Activated CD4-positive, alpha-beta T cell treated with anti-CD3 and anti-CD28 coated beads, Interleukin-2, amount 10 ng/mL, durations not matched to agents 24 days and 14 days (primary cell): ENCODE measurements at regions of chr15 and their contacts with region 1.

Region 1: GRCh38 chr15:72117486-72118399 is at the start of gene MYO9A:
- DNase-seq: peak; percentile 98
- H3K4me3 Mint-ChIP-seq: peak within 1 kb of the TSS; percentile 95
- H3K27ac Mint-ChIP-seq: peak within 1 kb of the TSS; percentile 99
- H3K4me1 Mint-ChIP-seq: peaks cover 26% of the 10 kb centered on the region
- H3K27me3 Mint-ChIP-seq: peaks cover 17% of the 10 kb centered on the region
- total RNA-seq, gene MYO9A: 19.4 and 21.3 TPM in 2 replicates

Region 2: DNA sequence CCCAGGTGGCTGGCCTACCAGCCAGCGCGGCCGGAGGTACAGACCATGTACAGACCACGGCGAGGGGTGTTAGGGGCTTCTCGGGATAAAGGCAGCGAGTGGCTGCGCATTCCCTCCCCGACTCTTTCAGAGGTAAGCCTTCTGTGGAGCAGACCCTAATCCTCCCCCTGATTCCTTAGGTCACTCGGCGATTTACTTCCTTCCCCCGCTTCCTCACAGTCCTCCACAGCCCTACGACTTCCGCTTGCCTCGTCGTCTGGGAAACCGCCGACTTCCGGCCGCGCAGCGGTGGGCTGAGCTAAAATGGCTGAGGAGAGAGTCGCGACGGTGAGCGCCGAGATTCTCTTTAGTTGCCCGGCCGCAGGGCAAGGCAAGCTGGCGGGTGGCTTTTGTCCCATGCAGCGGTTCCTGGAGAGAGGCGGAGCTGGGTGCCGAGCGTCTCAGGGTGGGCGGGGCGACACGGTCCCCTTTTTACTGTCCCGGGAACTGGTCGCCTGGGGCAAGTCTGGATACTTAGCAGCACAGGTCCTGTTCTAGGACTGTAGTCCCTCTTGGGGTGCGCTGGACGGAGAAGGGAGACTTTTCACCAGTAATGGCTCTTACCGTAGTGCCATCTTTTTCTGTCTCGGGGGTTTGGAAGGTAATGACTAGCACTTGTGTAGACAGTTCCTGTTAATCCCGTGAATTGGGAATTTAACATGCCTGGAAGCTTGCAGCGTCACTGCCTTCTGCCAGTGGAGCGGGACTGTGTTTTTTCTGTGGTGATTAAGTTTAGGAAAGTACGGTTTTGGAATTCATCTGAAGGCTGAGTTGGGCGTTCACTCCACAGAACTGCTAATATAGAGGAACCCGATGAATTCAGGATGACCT is 568.4 kb after region 1 on chr15 and contains the starts of genes BBS4 and HIGD2B:
- intact Hi-C with region 1: loop called (anchors 5 kb)
- DNase-seq: peak; percentile 97
- H3K4me3 Mint-ChIP-seq: peak within 1 kb of the TSS; percentile 97
- H3K27ac Mint-ChIP-seq: peak within 1 kb of the TSS; percentile 88
- H3K4me1 Mint-ChIP-seq: peaks cover 21% of the 10 kb centered on the region
- H3K27me3 Mint-ChIP-seq: peaks cover under 1% of the 10 kb centered on the region
- total RNA-seq, gene BBS4: 8.3 and 10.2 TPM in 2 replicates
- total RNA-seq, gene HIGD2B: not detected in 2 replicates

Region 3: DNA sequence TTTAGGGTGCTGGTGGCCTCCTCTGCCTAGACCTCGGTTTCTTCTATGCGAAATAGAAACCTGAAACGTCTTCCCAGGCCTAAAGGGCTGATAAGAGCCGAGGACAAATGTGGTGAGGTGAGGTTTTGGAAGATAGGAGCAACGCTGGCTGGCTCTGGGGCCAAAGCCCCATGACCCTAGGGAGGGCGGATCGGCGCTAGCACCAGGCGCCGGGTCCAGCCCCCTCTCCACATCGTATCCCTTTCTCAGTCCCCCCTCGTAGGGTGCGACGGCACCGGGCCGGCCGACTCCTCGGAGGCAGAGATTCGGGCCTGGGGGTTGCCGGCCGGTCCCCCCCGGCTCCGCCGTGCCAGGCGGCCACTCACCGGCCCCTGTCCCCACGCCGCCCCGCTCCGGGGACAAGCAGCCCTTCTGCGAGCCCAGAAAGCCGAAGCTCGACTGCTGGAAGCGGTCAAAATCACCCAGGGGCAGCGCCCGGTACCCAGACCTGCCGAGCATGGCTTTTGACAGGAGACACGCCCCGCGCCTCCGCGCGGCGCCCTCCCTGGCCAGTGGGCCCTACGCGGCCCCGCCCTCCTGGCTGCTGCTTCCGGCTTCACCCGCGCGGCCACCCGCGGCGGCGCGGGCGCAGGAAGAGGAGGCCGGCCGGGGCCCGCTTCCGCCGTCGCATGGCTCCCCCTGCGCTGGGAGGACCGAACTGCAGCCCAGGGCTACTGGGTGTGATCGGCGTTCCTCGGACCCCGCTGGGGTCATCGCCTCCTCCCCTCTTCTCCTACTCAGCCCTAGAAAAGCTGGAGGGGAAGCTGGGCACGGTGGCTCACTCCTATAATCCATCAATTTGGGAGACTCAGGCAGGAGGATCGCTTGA is 1874.2 kb after region 1 on chr15 and contains the start of gene STOML1:
- intact Hi-C with region 1: loop called (anchors 10 kb)
- DNase-seq: peak; percentile 100
- H3K4me3 Mint-ChIP-seq: peak within 1 kb of the TSS; percentile 85
- H3K27ac Mint-ChIP-seq: peak within 1 kb of the TSS; percentile 86
- H3K4me1 Mint-ChIP-seq: peaks cover 50% of the 10 kb centered on the region
- H3K27me3 Mint-ChIP-seq: no peaks in the 10 kb centered on the region
- total RNA-seq, gene STOML1: 10.3 and 10.6 TPM in 2 replicates